ENCODE measurements at regions of chr16 and their contacts with region 1.

Region 1: GRCh38 chr16:67246934-67247697 is at the start of gene FHOD1:
- DNase-seq: peak; percentile 99
- H3K4me3 Mint-ChIP-seq: peak within 1 kb of the TSS; percentile 89
- H3K27ac Mint-ChIP-seq: peak within 1 kb of the TSS; percentile 76
- H3K4me1 Mint-ChIP-seq: peaks cover 51% of the 10 kb centered on the region
- H3K27me3 Mint-ChIP-seq: peaks cover 8% of the 10 kb centered on the region
- total RNA-seq, gene FHOD1: 70.7 to 73.7 TPM

Region 2: GRCh38 chr16:66984892-66985311 is 262.2 kb before region 1 on chr16:
- CTCF ChIA-PET with region 1: no interaction called
- intact Hi-C with region 1: loop called (anchors 2 kb)
- DNase-seq: peak; percentile 81
- H3K4me3 Mint-ChIP-seq: no peak overlapping the region
- H3K27ac Mint-ChIP-seq: peak overlapping the region; percentile 96
- H3K4me1 Mint-ChIP-seq: peaks cover 30% of the 10 kb centered on the region
- H3K27me3 Mint-ChIP-seq: no peaks in the 10 kb centered on the region

Region 3: DNA sequence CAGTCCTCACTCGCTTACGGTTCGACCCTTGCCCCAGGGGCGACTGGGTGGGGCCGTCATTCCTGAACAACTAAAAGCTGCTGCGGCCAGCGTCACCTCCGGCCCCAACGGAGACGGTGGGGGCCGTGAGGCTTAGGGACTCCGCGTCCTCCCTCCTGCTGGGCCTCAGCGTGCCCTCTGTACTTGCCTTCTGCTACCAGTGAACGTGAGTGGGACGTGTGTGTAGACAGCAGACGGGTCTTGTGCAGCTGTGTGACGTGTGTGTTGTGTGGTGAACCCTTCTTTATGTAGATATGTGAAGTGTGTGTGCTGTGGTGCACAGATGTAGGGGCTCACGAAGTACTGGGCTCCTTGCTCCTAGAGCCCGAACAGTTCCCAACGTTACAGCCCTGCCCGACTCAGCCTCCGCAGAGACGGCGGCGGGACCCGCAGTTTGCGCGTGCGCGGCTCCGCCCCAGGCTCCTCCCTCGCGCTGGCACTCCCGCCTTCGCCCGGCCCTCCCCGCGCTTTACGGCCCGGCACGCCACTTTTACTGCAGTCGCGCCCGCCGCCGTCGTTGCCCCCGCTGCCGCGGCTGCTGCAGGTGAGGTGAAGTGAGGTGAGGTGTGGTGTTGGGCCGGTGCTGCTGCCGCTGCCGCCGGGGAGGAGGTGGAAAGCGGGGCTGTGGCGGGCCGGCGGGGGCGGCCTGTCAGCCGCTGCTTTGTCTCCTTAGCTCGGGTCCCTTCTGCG is 137.5 kb before region 1 on chr16 and contains the start of gene PHAF1:
- CTCF ChIA-PET with region 1: no interaction called
- intact Hi-C with region 1: loop called (anchors 2 kb)
- DNase-seq: peak; percentile 95
- H3K4me3 Mint-ChIP-seq: peak within 1 kb of the TSS; percentile 94
- H3K27ac Mint-ChIP-seq: no peak within 1 kb of the TSS
- H3K4me1 Mint-ChIP-seq: peaks cover 27% of the 10 kb centered on the region
- H3K27me3 Mint-ChIP-seq: no peaks in the 10 kb centered on the region
- total RNA-seq, gene PHAF1: 7.8 to 8.4 TPM

Region 4: DNA sequence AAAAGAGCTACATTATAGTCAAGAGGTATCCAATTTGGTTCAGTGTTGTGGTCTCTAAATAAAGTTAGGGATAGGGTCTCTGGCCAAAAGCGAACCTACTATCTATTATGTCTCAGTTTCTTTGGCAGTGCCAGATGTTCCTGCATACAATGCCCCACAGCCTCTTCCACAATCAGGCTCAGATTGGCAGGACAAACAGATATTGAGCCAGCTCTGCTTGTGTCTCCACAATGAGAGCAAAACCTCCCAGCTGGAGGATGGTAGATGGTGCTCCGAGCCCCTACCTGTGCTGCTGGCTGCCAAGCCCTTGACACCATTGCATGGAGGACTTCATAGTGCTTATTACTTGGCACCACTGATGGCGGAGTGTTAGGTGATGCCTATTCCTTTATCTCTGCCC is 117.7 kb before region 1 on chr16:
- CTCF ChIA-PET with region 1: no interaction called
- intact Hi-C with region 1: no loop called
- DNase-seq: no peak
- H3K4me3 Mint-ChIP-seq: no peak overlapping the region
- H3K27ac Mint-ChIP-seq: no peak overlapping the region
- H3K4me1 Mint-ChIP-seq: no peaks in the 10 kb centered on the region
- H3K27me3 Mint-ChIP-seq: no peaks in the 10 kb centered on the region

Region 5: DNA sequence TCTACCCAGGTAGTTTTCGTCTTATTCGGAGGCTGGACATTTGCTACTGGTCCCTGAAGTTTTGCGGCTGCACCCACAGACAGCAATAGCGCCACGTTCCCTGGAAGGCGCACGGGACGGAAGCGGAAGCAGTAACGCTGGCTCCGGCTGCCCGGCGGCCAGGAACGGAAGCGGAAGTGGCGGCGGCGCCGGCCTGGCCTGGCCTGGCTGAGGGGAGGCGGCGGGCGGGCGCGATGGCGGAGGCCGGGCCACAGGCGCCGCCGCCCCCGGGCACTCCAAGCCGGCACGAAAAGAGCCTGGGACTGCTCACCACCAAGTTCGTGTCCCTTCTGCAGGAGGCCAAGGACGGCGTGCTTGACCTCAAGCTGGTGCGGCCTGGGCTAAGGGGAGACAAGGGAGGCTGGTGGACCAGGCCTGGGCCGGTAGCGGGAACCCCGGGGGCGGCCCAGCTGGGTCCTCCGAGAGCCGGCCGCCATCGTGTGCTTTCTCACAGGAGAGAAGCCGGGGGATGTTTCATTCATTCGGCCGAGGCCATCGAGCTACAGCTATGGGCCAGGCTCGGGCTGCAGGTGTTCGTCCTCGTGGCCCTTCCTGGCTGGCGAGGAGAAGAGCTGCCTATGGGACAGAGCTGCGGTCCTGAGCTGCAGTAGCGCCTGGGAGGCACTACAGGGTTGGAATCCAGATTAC is 55.0 kb before region 1 on chr16 and contains the start of gene E2F4:
- CTCF ChIA-PET with region 1: no interaction called
- intact Hi-C with region 1: loop called (anchors 1 kb)
- DNase-seq: peak; percentile 91
- H3K4me3 Mint-ChIP-seq: peak within 1 kb of the TSS; percentile 86
- H3K27ac Mint-ChIP-seq: peak within 1 kb of the TSS; percentile 80
- H3K4me1 Mint-ChIP-seq: peaks cover 43% of the 10 kb centered on the region
- H3K27me3 Mint-ChIP-seq: no peaks in the 10 kb centered on the region
- total RNA-seq, gene E2F4: 65.1 to 66.5 TPM

Region 6: GRCh38 chr16:67279296-67280089 is 32.4 kb after region 1 on chr16 and contains the start of gene PLEKHG4:
- CTCF ChIA-PET with region 1: interaction called, 4 read pairs
- intact Hi-C with region 1: loop called (anchors 1 kb)
- DNase-seq: peak; percentile 85
- H3K4me3 Mint-ChIP-seq: peak within 1 kb of the TSS; percentile 79
- H3K27ac Mint-ChIP-seq: peak within 1 kb of the TSS; percentile 86
- H3K4me1 Mint-ChIP-seq: peaks cover 20% of the 10 kb centered on the region
- H3K27me3 Mint-ChIP-seq: no peaks in the 10 kb centered on the region
- total RNA-seq, gene PLEKHG4: 14.3 to 14.4 TPM

Region 7: DNA sequence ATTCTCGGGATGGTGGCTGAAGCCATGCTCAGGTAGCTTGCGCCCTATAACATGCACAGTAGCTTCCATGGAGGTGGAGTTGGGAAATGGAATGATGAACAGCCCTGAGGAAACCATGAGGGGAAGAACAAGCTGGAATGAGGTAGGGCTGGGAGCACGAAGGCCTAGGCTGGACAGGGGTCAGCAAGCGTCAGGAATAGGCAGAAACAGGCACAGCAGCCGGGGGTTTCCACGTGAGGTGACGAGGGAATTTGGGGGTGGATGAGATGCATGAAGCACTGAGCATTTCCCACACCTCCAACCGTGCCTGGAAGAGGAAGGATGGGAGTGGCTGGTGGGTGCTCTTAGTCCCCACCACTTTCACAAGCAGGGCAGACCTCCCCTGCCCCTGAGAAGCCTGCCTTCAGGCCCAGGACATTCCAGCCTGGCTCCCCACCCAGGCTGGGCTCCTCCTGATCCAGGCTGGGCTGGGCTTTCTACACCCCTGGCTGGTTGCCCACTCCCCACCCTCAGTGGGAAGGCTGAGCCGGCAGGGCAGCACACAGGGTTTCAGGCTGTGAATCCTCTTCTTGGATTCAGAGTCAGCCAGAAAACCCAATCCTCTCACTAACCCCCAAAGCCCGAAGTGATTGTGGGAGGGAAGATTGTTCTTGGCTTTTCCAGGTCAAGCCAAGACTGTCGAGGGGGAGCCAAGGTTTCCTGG is 54.1 kb after region 1 on chr16:
- CTCF ChIA-PET with region 1: no interaction called
- intact Hi-C with region 1: no loop called
- DNase-seq: no peak
- H3K4me3 Mint-ChIP-seq: no peak overlapping the region
- H3K27ac Mint-ChIP-seq: no peak overlapping the region
- H3K4me1 Mint-ChIP-seq: no peaks in the 10 kb centered on the region
- H3K27me3 Mint-ChIP-seq: peaks cover 5% of the 10 kb centered on the region

Region 8: GRCh38 chr16:67317853-67318252 is 70.7 kb after region 1 on chr16:
- CTCF ChIA-PET with region 1: no interaction called
- intact Hi-C with region 1: no loop called
- DNase-seq: no peak
- H3K4me3 Mint-ChIP-seq: no peak overlapping the region
- H3K27ac Mint-ChIP-seq: no peak overlapping the region
- H3K4me1 Mint-ChIP-seq: peaks cover 7% of the 10 kb centered on the region
- H3K27me3 Mint-ChIP-seq: peaks cover 27% of the 10 kb centered on the region

Region 9: DNA sequence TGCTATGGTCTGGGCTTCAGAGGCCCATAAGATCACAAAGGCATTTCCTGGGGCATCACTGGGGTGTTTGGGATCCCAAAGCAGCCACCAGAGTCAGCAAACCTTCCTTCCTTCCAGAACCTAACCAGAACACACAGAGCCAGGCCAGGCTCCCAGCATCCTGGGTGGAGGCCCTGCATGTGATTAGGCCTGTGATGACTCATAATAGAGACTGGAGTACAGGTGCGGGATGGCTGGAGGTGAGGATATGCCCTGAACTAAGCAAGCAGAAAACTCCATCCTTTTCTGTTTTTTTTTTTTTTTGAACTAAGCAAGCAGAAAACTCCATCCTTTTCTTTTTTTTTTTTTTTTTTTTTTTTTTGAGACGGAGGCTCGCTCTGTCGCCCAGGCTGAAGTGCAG is 489.7 kb after region 1 on chr16:
- CTCF ChIA-PET with region 1: no interaction called
- intact Hi-C with region 1: no loop called
- DNase-seq: no peak
- H3K4me3 Mint-ChIP-seq: no peak overlapping the region
- H3K27ac Mint-ChIP-seq: no peak overlapping the region
- H3K4me1 Mint-ChIP-seq: no peaks in the 10 kb centered on the region
- H3K27me3 Mint-ChIP-seq: no peaks in the 10 kb centered on the region

Measured in activated naive CD4-positive, alpha-beta T cell treated with anti-CD3 and anti-CD28 coated beads for 36 hours (primary cell).